ENCODE measurements at regions of chr4 and their contacts with region 1.

Region 1: GRCh38 chr4:123396307-123397143 is at the start of gene SPRY1:
- DNase-seq: peak; percentile 89
- H3K4me3 ChIP-seq: peak within 1 kb of the TSS; percentile 27 to 84 (median 49)
- H3K27ac ChIP-seq: peak within 1 kb of the TSS; percentile 53
- H3K4me1 ChIP-seq: peaks cover 15% of the 10 kb centered on the region
- H3K27me3 ChIP-seq: no peaks in the 10 kb centered on the region
- CTCF ChIP-seq: no peak
- POLR2A ChIP-seq: peak; percentile 68
- total RNA-seq, gene SPRY1: 43.7 and 59.6 TPM in 2 replicates

Region 2: DNA sequence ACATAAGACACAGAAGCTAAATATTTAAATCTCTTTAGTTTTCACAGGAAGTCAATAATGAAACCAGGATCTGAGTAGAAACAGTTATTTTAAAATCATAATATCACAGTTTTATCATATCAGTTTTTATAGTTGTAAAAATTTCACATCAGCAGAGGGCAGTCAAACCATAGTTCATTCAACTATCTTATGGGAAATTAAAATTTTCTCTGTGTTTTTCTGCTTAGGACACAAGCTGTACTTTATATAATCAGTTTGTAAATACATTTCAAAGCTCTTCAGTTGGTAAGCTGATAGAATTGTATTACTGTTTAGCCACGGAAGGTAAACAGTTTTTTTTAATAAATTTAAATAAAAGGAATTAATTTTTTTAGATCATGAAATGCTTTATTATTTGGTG is 269.3 kb before region 1 on chr4:
- CTCF ChIA-PET with region 1: interaction called, 25 read pairs
- POLR2A ChIA-PET with region 1: no interaction called
- dilution Hi-C with region 1: no loop called
- intact Hi-C with region 1: loop called (anchors 1 kb)
- DNase-seq: peak; percentile 67
- H3K4me3 ChIP-seq: no peak overlapping the region
- H3K27ac ChIP-seq: peak overlapping the region; percentile 65
- H3K4me1 ChIP-seq: peaks cover 19% of the 10 kb centered on the region
- H3K27me3 ChIP-seq: no peaks in the 10 kb centered on the region
- CTCF ChIP-seq: no peak
- POLR2A ChIP-seq: no peak

Region 3: DNA sequence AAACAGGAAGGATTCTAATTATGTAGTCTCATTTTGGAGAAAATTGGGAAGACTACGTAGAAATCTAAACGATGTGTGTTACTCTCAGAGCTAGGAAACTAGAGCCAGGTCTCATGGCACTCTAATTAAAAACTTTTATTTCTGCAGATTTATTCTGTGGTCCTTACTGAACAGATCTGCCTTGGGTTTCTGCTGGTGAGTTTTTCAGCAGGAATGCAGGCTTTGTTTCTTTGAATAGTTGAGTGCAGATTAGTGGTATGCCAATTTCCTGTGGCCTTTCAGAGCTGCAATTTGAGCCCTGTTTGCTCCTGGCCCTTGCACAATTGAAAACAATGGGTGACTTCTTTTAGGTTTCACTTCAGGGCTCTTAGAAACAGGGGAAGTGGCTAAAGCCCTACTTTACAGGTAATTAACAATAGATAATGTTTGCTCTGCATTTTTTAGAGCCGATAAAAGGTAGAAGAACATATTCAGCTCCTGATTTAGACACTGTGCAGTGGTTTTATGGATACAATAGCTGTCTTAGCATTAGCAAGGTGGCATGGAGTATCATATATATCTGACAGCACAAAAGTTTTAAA is 21.9 kb after region 1 on chr4:
- CTCF ChIA-PET with region 1: interaction called, 3 read pairs
- POLR2A ChIA-PET with region 1: no interaction called
- dilution Hi-C with region 1: no loop called
- intact Hi-C with region 1: loop called (anchors 1 kb)
- DNase-seq: peak; percentile 82
- H3K4me3 ChIP-seq: peak overlapping the region in 1 of 3 experiments; percentile 34
- H3K27ac ChIP-seq: peak overlapping the region; percentile 58
- H3K4me1 ChIP-seq: peaks cover 45% of the 10 kb centered on the region
- H3K27me3 ChIP-seq: no peaks in the 10 kb centered on the region
- CTCF ChIP-seq: no peak
- POLR2A ChIP-seq: no peak

Region 4: GRCh38 chr4:123555233-123555806 is 158.8 kb after region 1 on chr4:
- CTCF ChIA-PET with region 1: interaction called, 7 read pairs
- POLR2A ChIA-PET with region 1: no interaction called
- dilution Hi-C with region 1: no loop called
- intact Hi-C with region 1: loop called (anchors 1 kb)
- DNase-seq: peak; percentile 97
- H3K4me3 ChIP-seq: no peak overlapping the region
- H3K27ac ChIP-seq: no peak overlapping the region
- H3K4me1 ChIP-seq: peaks cover 29% of the 10 kb centered on the region
- H3K27me3 ChIP-seq: peaks cover 32 to 50% of the 10 kb centered on the region in 2 experiments
- CTCF ChIP-seq: no peak
- POLR2A ChIP-seq: no peak

Region 5: DNA sequence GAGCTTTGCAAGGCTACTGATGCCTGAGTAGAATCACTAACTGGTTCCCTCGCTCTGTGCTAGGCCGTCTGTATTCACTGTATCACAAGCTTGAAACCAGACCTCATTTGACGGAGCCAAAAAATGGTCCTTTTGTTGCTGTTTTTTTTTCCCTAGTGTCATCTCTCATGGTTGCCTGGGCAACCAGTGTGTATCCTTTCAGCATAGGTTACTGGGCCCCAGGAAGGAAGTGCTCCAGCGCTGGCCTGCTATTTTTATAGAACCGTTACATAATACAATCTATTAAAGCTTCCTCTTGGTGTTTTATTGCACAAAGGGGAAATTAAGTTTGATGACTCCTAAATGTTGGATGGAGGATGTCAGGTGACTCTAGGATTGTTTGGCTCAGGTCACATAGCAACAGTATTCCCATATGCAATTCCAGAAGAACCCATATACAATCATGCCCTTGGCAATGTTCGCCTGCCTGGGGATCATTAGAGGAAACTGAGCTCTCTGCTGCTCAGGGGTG is 220.5 kb after region 1 on chr4:
- CTCF ChIA-PET with region 1: no interaction called
- POLR2A ChIA-PET with region 1: no interaction called
- dilution Hi-C with region 1: no loop called
- intact Hi-C with region 1: loop called (anchors 1 kb)
- DNase-seq: peak; percentile 81
- H3K4me3 ChIP-seq: no peak overlapping the region
- H3K27ac ChIP-seq: no peak overlapping the region
- H3K4me1 ChIP-seq: peaks cover 19% of the 10 kb centered on the region
- H3K27me3 ChIP-seq: no peaks in the 10 kb centered on the region
- CTCF ChIP-seq: no peak
- POLR2A ChIP-seq: no peak

Region 6: GRCh38 chr4:123893011-123893981 is 496.8 kb after region 1 on chr4:
- CTCF ChIA-PET with region 1: no interaction called
- POLR2A ChIA-PET with region 1: no interaction called
- dilution Hi-C with region 1: no loop called
- intact Hi-C with region 1: loop called (anchors 2 kb)
- DNase-seq: peak; percentile 87
- H3K4me3 ChIP-seq: peak overlapping the region in 1 of 3 experiments; percentile 26
- H3K27ac ChIP-seq: peak overlapping the region; percentile 96
- H3K4me1 ChIP-seq: peaks cover 69% of the 10 kb centered on the region
- H3K27me3 ChIP-seq: no peaks in the 10 kb centered on the region
- CTCF ChIP-seq: no peak
- POLR2A ChIP-seq: peak; percentile 43

Region 7: GRCh38 chr4:124469981-124470380 is 1073.5 kb after region 1 on chr4:
- CTCF ChIA-PET with region 1: no interaction called
- POLR2A ChIA-PET with region 1: no interaction called
- dilution Hi-C with region 1: no loop called
- intact Hi-C with region 1: no loop called
- DNase-seq: no peak
- H3K4me3 ChIP-seq: no peak overlapping the region
- H3K27ac ChIP-seq: no peak overlapping the region
- H3K4me1 ChIP-seq: no peaks in the 10 kb centered on the region
- H3K27me3 ChIP-seq: no peaks in the 10 kb centered on the region
- CTCF ChIP-seq: no peak
- POLR2A ChIP-seq: no peak